ENCODE measurements at regions of chr9 and their contacts with region 1.

Region 1: GRCh38 chr9:127754099-127755050 is 19.3 kb upstream of the TOR2A start:
- DNase-seq: peak; percentile 80
- ATAC-seq: peak; percentile 84
- H3K4me3 Mint-ChIP-seq: peak overlapping the region; percentile 68
- H3K27ac Mint-ChIP-seq: no peak overlapping the region
- H3K4me1 Mint-ChIP-seq: peaks cover 4% of the 10 kb centered on the region; the same call in 1 of the 2 replicates
- H3K27me3 Mint-ChIP-seq: peaks cover 58% of the 10 kb centered on the region
- CTCF ChIP-seq: no peak

Region 2: DNA sequence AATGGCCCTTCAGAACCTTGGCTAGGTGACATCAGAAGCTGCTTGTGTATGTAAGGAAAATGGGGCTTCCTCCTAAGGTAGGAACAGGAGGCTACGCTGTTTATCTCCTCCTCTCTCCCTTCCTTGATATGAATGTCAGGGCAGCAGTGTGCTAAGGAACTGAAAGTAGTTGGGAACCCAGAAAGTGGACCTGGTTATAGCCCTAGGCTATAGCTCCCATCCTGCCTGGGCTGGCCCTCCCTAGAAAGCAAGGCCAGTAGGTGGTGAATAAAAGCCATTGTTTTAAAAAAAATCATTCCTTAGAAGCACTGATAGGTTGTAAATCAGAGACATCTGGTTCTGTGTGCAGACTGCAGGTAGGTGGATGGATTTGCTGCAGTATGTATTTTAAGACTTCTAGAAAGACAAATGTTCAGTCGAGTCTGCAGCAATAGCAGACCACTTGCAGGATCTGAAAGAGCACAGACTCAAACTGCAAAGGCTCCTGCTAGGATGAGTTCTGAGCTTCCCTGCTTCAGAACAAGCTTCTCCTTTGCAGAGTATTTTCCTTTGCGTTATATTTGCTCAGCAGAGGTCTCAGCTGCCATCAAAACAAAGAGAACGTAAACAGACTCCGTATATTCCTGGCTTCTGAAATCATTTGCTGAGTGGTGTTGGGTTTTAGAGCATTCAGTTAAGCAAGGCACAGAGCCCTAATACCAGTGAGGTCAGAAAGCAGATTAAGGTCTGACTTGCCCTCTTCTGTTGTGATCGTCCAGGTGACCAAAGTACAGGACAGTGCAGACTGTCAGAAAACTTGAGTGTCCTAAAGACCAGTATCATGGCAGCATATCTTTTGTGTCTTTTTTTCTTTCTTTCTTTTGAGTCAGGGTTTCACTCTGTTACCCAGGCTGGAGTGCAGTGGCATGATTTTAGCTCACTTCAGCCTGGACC is 67.6 kb before region 1 on chr9:
- CTCF ChIA-PET with region 1: no interaction called
- POLR2A ChIA-PET with region 1: no interaction called
- DNase-seq: no peak
- ATAC-seq: no peak
- H3K4me3 Mint-ChIP-seq: no peak overlapping the region
- H3K27ac Mint-ChIP-seq: no peak overlapping the region
- H3K4me1 Mint-ChIP-seq: no peaks in the 10 kb centered on the region
- H3K27me3 Mint-ChIP-seq: no peaks in the 10 kb centered on the region
- CTCF ChIP-seq: no peak

Region 3: GRCh38 chr9:127715394-127716337 is 38.7 kb before region 1 on chr9 and contains the starts of genes PTRH1 and TTC16:
- CTCF ChIA-PET with region 1: no interaction called
- POLR2A ChIA-PET with region 1: no interaction called
- DNase-seq: peak; percentile 99
- ATAC-seq: peak; percentile 89
- H3K4me3 Mint-ChIP-seq: peak within 1 kb of the TSS; percentile 97
- H3K27ac Mint-ChIP-seq: peak within 1 kb of the TSS; percentile 91; the same call in 1 of the 2 replicates
- H3K4me1 Mint-ChIP-seq: peaks cover 22% of the 10 kb centered on the region
- H3K27me3 Mint-ChIP-seq: no peaks in the 10 kb centered on the region
- CTCF ChIP-seq: no peak
- total RNA-seq, gene PTRH1: 13.1 to 16.9 TPM (median 13.9 TPM) in 3 replicates
- total RNA-seq, gene TTC16: not detected in 3 replicates

Region 4: DNA sequence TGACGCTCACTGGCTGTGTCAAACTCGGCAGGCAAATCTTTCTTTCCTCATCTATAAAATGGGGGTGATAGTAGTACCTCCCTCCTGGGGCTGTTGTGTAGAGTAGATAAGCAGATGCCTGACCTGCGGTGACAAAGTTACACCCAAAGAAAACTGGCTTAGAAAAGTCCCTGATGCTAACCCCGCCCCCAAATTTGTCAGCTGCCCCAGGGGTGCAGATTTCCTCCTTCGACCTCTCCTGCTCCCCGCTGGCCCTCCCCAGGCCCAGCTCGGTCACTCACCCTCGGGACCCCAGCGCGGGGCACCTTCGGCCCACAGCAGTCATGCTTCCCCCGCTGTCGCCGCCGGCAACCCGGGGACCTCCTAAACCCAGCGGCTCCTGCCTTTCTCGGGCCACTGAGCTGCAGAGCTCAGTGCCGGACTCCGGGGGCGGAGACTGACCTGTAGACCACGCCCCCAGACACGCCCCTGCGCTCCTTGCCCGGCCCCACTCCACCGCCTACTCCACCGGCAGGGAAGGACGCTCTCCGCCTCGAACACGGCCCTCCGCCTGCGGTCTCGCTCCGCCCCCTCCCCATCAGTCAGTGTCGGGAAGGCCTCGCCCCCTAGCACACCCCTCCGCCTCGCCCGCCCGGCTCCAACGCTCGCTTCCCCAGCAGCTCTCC is 16.7 kb after region 1 on chr9:
- CTCF ChIA-PET with region 1: interaction called, 28 read pairs
- POLR2A ChIA-PET with region 1: interaction called, 5 read pairs
- DNase-seq: peak; percentile 100
- ATAC-seq: peak; percentile 97
- H3K4me3 Mint-ChIP-seq: peak overlapping the region; percentile 84
- H3K27ac Mint-ChIP-seq: no peak overlapping the region
- H3K4me1 Mint-ChIP-seq: peaks cover 32% of the 10 kb centered on the region
- H3K27me3 Mint-ChIP-seq: peaks cover 11% of the 10 kb centered on the region
- CTCF ChIP-seq: no peak